ENCODE measurements at regions of chr12 and their contacts with region 1.

Region 1: DNA sequence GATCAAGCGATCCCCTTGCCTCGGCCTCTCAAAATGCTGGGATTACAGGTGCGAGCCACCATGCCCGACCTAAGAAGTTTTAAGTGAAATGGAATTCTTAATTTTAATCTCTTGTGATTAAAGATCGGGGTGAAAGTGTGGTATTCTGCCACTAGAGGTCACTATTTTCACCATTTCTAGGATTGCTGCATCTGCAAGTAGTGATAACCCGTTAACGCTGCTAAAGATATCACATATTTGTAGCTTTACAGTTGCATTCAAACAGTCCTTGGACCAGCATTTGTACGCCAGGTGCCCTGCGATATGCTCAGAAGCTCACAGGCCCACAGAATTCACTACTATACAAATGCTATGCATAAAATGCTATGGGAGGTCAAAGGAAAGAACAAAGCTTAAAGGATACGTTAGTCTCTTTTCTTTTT is 19.3 kb downstream of the CCDC62 start:
- DNase-seq: peak; percentile 38
- H3K4me3 ChIP-seq: no peak overlapping the region
- H3K27ac ChIP-seq: no peak overlapping the region
- H3K27me3 ChIP-seq: no peaks in the 10 kb centered on the region
- CTCF ChIP-seq: peak; percentile 67

Region 2: DNA sequence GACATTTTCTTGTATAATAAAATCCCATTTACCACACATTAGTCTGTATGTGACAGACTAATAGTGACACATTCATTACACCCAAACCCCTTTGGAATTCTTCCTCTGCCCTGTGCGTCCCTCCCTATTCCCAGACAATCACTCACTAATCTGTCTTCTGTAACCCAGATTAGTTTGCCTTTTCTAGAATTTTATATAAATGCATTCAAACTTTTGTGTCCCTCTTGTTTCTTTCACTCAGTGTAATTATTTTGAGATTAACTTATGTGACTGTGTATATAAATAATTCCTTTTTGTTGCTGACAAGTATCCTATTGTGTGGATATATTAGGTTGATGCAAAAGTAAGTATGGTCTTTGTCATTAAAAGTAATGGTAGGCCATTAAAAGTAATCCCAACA is 14.0 kb after region 1 on chr12:
- CTCF ChIA-PET with region 1: interaction called, 50 read pairs
- POLR2A ChIA-PET with region 1: interaction called, 5 read pairs
- DNase-seq: no peak
- H3K4me3 ChIP-seq: no peak overlapping the region
- H3K27ac ChIP-seq: no peak overlapping the region
- H3K27me3 ChIP-seq: no peaks in the 10 kb centered on the region
- CTCF ChIP-seq: no peak

Region 3: DNA sequence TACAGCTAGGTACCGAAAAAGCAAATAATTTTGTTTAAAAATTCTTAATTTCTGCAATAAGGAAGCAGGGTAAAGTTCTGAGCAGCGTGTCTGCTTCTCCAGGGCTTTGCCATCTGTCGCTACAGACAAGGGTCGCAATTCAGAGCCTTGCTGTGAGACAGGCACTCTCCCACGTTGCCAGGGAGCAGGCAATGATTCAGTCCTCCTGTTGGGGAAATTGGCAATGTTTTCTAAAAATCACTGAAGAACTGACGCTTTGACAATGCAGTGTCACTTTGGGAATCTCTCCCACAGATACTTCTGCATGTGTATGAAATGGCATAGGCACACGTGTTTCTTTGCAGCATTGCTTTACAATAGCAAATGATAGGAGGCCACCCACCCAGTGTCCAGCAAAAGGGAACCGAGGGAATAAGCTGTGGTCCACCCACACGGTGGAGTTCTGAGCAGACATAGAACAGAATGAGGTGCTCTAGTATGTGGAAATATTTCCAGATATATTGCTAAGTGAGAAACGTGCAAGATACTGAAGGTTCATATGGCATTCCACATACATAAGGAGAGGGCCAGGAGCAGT is 25.6 kb after region 1 on chr12:
- CTCF ChIA-PET with region 1: interaction called, 13 read pairs
- POLR2A ChIA-PET with region 1: no interaction called
- DNase-seq: no peak
- H3K4me3 ChIP-seq: no peak overlapping the region
- H3K27ac ChIP-seq: no peak overlapping the region
- H3K27me3 ChIP-seq: no peaks in the 10 kb centered on the region
- CTCF ChIP-seq: no peak

Region 4: DNA sequence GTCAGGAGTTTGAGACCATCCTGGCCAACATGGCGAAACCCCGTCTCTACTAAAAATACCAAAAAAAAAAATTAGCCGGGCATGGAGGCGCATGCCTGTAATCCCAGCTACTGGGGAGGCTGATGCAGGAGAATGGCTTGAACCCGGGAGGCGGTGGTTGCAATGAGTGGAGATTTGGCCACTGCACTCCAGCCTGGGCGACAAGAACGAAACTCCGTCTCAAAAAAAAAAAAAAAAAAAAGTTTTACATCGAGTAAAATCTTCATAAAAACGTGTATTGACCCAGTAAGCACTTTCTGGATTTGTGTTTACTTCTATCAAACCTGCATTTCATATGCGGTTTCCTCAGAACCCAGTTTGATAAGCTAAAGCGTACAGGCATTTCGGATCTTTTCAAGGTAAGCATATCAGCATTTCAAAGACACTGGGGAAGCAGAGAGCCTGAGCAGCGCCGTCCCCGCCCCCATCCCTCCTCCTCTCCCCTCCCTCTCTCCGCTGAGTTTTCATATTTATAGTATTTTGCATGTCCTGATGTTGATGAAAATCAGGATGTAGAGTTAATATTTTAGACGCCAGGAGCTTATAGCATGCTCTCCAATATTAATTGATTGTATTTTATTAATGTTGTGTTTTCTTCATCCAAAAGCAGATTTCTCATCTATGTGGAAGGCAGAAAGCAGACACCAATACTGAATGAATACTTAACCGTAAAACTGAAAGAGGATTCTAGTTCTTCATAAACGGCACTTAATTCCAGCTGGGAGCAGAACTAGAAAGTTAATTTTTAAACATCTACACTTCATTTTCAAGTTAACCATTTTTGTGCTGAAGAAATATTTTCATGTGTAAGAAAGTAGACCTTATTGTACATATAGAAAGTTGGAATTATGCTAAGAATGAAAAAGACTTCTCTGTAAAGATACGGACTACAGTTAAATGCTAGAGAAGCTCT is 32.4 kb after region 1 on chr12:
- CTCF ChIA-PET with region 1: interaction called, 33 read pairs
- POLR2A ChIA-PET with region 1: no interaction called
- DNase-seq: no peak
- H3K4me3 ChIP-seq: peak overlapping the region; percentile 52
- H3K27ac ChIP-seq: no peak overlapping the region
- H3K27me3 ChIP-seq: no peaks in the 10 kb centered on the region
- CTCF ChIP-seq: no peak

Region 5: GRCh38 chr12:122834104-122834920 is 40.6 kb after region 1 on chr12:
- CTCF ChIA-PET with region 1: interaction called, 15 read pairs
- POLR2A ChIA-PET with region 1: no interaction called
- DNase-seq: no peak
- H3K4me3 ChIP-seq: peak overlapping the region; percentile 66
- H3K27ac ChIP-seq: peak overlapping the region; percentile 58
- H3K27me3 ChIP-seq: no peaks in the 10 kb centered on the region
- CTCF ChIP-seq: 0 out of 2 replicates have a peak, but pooled peaks have one; percentile 14

Region 6: DNA sequence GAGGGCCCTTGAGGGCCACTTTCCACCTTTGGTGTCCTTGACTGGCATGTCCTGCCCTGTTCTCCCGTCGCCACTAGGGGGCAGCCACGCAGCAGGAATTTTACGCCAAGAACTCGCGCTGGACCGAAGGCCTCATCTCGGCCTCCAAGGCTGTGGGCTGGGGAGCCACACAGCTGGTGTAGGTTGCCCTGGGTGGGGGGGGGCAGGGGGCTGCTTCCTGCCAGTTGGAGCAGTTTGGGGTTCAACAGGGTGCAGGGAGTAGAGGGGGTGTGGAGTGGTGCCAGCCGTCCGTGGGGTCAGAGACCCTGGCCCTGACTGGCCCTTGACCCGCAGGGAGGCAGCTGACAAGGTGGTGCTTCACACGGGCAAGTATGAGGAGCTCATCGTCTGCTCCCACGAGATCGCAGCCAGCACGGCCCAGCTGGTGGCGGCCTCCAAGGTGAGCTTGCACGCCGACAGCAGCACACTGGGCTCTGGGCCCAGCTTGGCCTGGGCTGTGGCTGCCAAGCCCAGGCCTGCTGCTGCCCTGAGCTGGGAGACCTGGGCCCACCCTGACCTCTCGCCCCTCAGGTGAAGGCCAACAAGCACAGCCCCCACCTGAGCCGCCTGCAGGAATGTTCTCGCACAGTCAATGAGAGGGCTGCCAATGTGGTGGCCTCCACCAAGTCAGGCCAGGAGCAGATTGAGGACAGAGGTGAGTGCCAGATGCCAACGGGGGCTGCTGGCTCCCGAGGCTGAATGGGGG is 66.8 kb after region 1 on chr12:
- CTCF ChIA-PET with region 1: interaction called, 15 read pairs
- POLR2A ChIA-PET with region 1: no interaction called
- DNase-seq: peak; percentile 46
- H3K4me3 ChIP-seq: no peak overlapping the region
- H3K27ac ChIP-seq: no peak overlapping the region
- H3K27me3 ChIP-seq: no peaks in the 10 kb centered on the region
- CTCF ChIP-seq: peak; percentile 89

Region 7: GRCh38 chr12:122951979-122952892 is 158.5 kb after region 1 on chr12:
- CTCF ChIA-PET with region 1: interaction called, 75 read pairs
- POLR2A ChIA-PET with region 1: no interaction called
- DNase-seq: no peak
- H3K4me3 ChIP-seq: no peak overlapping the region
- H3K27ac ChIP-seq: no peak overlapping the region
- H3K27me3 ChIP-seq: no peaks in the 10 kb centered on the region
- CTCF ChIP-seq: peak; percentile 87